ENCODE measurements at regions of chr13 and their contacts with region 1.

Region 1: DNA sequence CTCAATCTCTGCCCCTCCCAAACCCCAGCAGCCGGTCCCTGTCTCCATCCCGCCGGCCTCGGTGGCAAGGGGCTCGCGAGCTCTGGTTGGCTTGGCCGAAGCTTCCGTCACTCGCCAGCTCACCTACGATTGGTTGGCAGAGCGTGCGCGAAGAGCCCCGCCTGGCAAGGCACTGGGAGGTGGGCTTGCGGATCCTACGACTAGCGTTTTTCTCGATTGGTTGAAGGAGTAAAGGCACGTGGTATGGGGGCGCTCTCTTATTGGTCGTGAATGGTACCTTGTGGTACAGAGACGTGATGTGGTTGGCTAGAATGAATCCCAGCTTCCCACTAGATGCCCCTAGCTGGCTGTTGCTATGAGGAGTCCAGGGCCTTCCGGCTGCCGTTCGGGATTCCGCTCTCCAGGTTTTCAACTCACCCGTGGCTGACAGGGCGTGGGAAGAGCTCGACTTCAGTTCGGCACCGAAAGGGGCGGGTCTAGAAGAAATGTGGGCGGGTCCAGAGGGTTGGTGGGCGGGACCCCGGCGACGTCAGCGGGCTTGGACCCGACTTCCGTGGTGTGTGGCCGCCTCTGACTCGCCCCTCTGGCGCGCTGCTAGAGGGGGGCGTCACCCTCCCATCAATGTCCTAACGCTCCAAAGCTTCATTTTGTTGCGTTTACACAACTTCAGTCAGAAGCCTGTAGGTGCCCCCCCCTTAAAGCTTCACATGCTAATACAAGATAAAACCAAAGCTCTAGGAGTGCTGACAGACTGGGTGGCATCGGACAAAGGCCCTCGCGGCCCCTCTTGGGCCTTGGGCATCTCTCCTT is 847 bp upstream of the RAP2A start:
- DNase-seq: peak; percentile 99
- H3K4me3 Mint-ChIP-seq: peak overlapping the region; percentile 99
- H3K27ac Mint-ChIP-seq: peak overlapping the region; percentile 100
- H3K4me1 Mint-ChIP-seq: peaks cover 39% of the 10 kb centered on the region
- H3K27me3 Mint-ChIP-seq: peaks cover 12% of the 10 kb centered on the region

Region 2: DNA sequence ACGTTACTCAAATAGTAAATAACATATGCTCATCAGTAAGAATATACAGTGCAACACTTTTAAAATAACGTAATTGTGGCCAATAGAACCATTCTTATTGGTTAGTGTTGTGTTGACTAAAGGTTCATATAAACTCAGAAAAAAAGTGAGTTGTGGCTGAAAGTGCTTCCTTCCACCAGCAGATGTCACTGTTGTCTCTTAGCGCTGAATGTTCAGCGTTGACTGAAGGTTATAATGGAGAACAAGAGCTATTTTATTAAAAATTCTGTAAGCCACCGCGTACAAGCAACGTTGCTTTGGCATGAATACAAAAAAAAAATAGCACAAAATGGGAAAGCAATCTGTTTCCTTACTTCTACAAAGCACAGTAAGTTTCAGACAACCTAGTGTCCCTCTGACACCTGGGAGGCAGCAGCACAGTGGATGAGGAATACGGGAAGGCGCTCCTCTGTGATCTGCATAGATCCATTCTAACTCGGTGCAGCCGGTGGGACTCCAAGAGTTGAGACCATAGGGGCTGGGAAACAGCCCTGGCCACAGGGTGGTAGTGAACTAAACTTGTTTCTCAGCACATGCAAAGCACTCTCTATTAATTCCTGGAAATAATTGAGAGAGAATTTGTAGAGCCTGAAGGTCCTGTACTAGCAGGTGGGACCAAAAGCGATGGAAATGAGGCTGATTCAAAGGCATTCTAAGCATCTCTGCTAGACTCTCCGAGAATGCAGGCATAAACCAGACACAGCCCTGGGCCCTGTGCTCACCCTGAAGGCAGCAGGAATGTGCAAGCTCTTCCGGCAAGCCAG is 414.9 kb before region 1 on chr13:
- intact Hi-C with region 1: no loop called
- DNase-seq: peak; percentile 6
- H3K4me3 Mint-ChIP-seq: no peak overlapping the region
- H3K27ac Mint-ChIP-seq: no peak overlapping the region
- H3K4me1 Mint-ChIP-seq: no peaks in the 10 kb centered on the region
- H3K27me3 Mint-ChIP-seq: peaks cover 13% of the 10 kb centered on the region

Region 3: DNA sequence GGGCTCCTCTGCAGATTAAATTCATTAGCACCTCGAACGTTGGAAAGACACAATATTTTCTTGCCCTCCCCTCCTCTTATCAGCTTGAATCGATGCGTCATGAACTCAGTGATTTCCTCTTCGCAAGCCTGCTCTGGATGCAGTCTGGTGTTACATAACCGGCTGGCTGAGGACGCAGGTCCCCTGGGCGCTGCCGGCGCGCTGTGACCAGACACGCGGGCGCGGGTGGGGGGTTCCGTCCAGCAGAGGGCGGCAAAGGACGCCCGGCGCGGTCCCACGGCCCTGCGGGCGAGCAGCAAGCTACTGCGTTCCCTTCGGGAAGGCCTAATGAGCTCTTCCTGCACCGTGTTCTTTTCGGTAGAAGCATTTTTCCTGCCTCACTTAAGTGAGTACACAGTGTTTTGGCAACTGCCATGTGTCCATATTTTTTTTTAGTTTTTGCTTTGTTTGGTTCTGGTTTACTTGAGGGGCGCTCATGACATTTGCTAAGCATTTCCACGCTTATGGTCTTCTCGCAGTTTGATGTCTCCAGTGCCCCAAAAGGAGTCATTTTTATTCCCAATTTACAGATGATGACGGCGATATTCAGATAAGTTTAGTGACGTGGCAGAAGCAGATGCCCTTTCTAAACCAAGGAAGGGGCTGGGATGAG is 323.2 kb before region 1 on chr13:
- intact Hi-C with region 1: loop called (anchors 5 kb)
- DNase-seq: peak; percentile 67
- H3K4me3 Mint-ChIP-seq: no peak overlapping the region
- H3K27ac Mint-ChIP-seq: no peak overlapping the region
- H3K4me1 Mint-ChIP-seq: peaks cover 8% of the 10 kb centered on the region
- H3K27me3 Mint-ChIP-seq: peaks cover 17% of the 10 kb centered on the region

Region 4: DNA sequence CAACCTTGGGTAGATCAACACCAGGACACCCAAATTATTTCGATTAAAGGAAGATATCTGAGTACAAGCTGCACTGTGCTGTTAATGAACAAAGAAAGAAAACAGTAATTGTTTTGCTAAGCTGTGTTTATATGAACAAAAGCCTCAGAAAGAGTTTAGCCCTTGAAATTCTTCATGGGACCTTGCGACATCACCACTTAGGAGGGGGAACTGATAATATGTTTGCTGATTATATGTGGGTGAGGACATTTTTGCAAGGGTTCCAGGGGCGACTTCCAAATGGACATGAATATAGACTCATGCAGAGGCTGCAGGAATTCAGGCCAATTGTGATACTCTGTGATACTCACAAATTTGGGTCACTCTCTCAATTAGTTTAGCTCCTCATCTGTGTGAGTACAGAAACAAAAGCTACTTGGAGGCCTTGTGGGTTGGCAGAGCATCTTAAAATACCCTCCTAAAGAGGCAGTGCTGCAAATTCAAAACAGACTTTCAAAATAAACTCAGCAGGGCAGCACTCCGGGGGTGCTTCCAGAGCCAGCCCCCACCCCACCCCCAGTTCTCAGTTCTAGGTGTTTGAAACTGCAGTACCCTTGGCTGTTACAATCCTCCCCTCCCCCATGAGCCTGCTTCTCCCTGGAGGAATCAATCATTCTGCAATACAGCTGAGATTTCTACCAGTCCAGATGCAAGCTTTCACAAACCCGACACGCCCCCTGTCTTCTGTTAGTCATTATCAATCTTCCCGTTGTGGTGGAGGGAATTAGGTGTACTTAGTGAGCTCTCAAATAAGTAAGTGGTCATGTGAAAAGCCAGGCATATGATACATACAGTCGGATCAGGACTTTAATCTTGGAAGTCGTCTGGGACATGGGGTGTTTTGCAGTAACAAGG is 308.0 kb before region 1 on chr13:
- intact Hi-C with region 1: loop called (anchors 1 kb)
- DNase-seq: no peak
- H3K4me3 Mint-ChIP-seq: no peak overlapping the region
- H3K27ac Mint-ChIP-seq: no peak overlapping the region
- H3K4me1 Mint-ChIP-seq: peaks cover 20% of the 10 kb centered on the region
- H3K27me3 Mint-ChIP-seq: peaks cover 16% of the 10 kb centered on the region

Region 5: GRCh38 chr13:97221989-97222700 is 211.0 kb before region 1 on chr13 and contains the start of gene MBNL2:
- intact Hi-C with region 1: loop called (anchors 1 kb)
- DNase-seq: peak; percentile 80
- H3K4me3 Mint-ChIP-seq: peak within 1 kb of the TSS; percentile 87
- H3K27ac Mint-ChIP-seq: peak within 1 kb of the TSS; percentile 82
- H3K4me1 Mint-ChIP-seq: peaks cover 49% of the 10 kb centered on the region
- H3K27me3 Mint-ChIP-seq: no peaks in the 10 kb centered on the region
- total RNA-seq, gene MBNL2: 20.7 and 24.2 TPM in 2 replicates

Region 6: GRCh38 chr13:97257800-97258799 is 175.0 kb before region 1 on chr13:
- intact Hi-C with region 1: loop called (anchors 1 kb)
- DNase-seq: no peak
- H3K4me3 Mint-ChIP-seq: peak overlapping the region; percentile 21
- H3K27ac Mint-ChIP-seq: peak overlapping the region; percentile 87
- H3K4me1 Mint-ChIP-seq: peaks cover 84% of the 10 kb centered on the region
- H3K27me3 Mint-ChIP-seq: no peaks in the 10 kb centered on the region

Region 7: DNA sequence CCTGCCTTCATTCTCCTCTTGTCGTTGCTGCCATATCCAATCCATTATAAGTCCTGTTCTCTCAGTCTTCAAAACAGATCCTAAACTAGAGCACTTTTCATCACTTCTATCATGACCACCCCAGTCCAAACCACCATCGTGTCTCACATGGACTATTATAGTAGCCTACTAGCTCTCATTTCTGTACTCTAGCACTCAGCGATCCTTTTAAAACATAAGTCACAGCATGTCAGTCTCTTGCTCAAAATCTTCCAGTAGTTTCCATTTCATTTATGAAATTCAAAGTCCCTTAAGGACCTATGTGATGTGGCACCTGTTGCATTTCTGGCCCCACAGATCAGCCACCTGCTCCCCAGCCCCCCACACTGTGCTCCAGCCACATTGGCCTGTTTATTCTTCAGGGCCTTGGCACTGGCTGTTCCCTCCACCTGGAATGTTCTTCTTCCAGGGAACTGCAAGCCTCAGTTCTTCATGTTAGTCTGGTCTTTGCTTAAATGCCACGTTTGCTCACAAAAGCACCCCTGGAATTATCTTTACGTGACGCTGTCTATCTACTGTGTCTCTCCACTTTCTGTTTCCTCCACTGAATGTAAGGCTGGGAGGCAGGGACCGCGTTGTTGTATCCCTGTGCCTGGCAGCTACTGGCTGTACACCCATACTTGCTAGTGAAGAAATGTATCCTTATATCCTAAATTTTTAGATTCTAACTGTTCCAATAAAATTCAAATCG is 146.6 kb before region 1 on chr13:
- intact Hi-C with region 1: loop called (anchors 2 kb)
- DNase-seq: no peak
- H3K4me3 Mint-ChIP-seq: no peak overlapping the region
- H3K27ac Mint-ChIP-seq: no peak overlapping the region
- H3K4me1 Mint-ChIP-seq: peaks cover 40% of the 10 kb centered on the region
- H3K27me3 Mint-ChIP-seq: peaks cover under 1% of the 10 kb centered on the region

Region 8: GRCh38 chr13:98570929-98571372 is 1137.8 kb after region 1 on chr13:
- intact Hi-C with region 1: loop called (anchors 5 kb)
- DNase-seq: peak; percentile 51
- H3K4me3 Mint-ChIP-seq: peak overlapping the region; percentile 81
- H3K27ac Mint-ChIP-seq: peak overlapping the region; percentile 91
- H3K4me1 Mint-ChIP-seq: peaks cover 98% of the 10 kb centered on the region
- H3K27me3 Mint-ChIP-seq: no peaks in the 10 kb centered on the region